Heart left ventricle (tissue), 16 donors: ENCODE measurements at regions of chr9 and their contacts with region 1.

Region 1: DNA sequence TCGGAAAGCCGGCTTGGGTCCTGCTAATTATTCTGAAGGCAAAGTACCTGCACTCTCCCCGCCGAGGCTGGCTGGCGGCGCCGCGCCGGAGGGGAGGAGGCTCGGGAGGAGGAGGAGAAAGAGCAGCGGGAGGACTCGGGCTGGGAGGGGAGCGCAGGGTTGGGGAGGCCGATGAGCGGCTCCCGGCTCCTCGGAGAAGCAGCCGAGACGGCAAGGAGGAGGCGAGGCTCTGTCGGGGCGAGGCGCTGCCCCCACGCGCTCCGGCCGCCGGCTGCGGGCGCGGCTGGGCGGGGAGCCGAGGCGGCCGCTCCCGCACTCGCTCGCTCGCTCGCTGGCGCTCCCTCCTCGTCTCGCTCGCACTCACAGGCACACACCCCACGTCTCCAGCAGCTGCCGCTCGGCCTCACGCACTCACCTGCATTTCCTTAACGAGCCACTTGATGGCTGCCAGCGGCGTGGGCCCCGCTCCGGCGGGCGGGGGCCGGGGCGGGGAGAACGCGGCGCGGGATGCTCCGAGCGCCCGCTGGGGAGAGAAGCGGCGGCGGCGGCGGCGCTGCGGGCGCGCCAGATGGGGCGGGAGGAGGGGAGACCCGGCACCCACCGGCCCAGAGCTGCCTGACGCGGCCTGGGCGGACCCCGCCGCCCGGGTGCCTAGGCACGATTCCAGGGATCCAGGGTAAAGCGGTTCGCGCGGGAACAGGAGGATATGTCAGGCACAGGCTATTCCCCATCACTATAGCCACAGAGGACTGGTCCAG is at the start of gene PTPRD:
- DNase-seq: peak in 2 of 5 donors; percentile 23 to 56
- ATAC-seq: peak in 2 of 4 donors; percentile 43 to 46
- H3K4me3 ChIP-seq: peak within 1 kb of the TSS in 11 of 12 donors; percentile 23 to 55 (median 41)
- H3K27ac ChIP-seq: no peak within 1 kb of the TSS
- H3K4me1 ChIP-seq: peaks cover 0 to 15% (median 0%) of the 10 kb centered on the region in 12 donors
- H3K27me3 ChIP-seq: peaks cover 6 to 78% (median 35%) of the 10 kb centered on the region in 9 donors
- CTCF ChIP-seq: peak in 1 of 12 donors; percentile 14
- POLR2A ChIP-seq: no peak
- total RNA-seq, gene PTPRD: 11.0 to 25.3 (median 19.2) TPM

Region 2: GRCh38 chr9:10396615-10397014 is 216.2 kb before region 1 on chr9:
- intact Hi-C with region 1: no loop called
- DNase-seq: no peak
- ATAC-seq: no peak
- H3K4me3 ChIP-seq: no peak overlapping the region
- H3K27ac ChIP-seq: no peak overlapping the region
- H3K4me1 ChIP-seq: no peaks in the 10 kb centered on the region
- H3K27me3 ChIP-seq: no peaks in the 10 kb centered on the region
- CTCF ChIP-seq: no peak
- POLR2A ChIP-seq: no peak

Region 3: DNA sequence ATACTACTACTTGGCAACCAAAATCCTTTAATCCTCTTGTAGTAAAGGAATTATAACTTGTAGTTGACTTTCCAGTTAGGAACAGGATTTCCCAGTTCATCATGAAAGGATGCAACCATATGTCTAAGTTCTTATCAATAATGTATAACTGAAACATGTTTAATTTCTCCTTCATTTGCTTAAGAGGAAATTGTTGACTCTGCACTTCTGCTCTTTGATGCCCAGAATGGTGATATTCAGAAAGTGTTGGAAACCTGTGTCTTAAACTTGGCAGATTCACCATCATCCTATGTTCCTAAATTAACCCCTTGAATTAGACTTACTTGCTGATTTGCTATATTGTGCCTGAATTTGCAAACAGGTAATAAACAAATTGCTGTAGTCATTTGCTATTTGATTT is 201.5 kb before region 1 on chr9:
- intact Hi-C with region 1: no loop called
- DNase-seq: no peak
- ATAC-seq: no peak
- H3K4me3 ChIP-seq: no peak overlapping the region
- H3K27ac ChIP-seq: no peak overlapping the region
- H3K4me1 ChIP-seq: no peaks in the 10 kb centered on the region
- H3K27me3 ChIP-seq: no peaks in the 10 kb centered on the region
- CTCF ChIP-seq: no peak
- POLR2A ChIP-seq: no peak

Region 4: GRCh38 chr9:10661994-10662393 is 49.2 kb after region 1 on chr9:
- intact Hi-C with region 1: no loop called
- DNase-seq: no peak
- ATAC-seq: no peak
- H3K4me3 ChIP-seq: no peak overlapping the region
- H3K27ac ChIP-seq: no peak overlapping the region
- H3K4me1 ChIP-seq: no peaks in the 10 kb centered on the region
- H3K27me3 ChIP-seq: no peaks in the 10 kb centered on the region
- CTCF ChIP-seq: no peak
- POLR2A ChIP-seq: no peak

Region 5: GRCh38 chr9:10678790-10679189 is 66.0 kb after region 1 on chr9:
- intact Hi-C with region 1: loop called in 1 of 10 experiments (anchors 10 kb)
- DNase-seq: no peak
- ATAC-seq: no peak
- H3K4me3 ChIP-seq: no peak overlapping the region
- H3K27ac ChIP-seq: no peak overlapping the region
- H3K4me1 ChIP-seq: no peaks in the 10 kb centered on the region
- H3K27me3 ChIP-seq: no peaks in the 10 kb centered on the region
- CTCF ChIP-seq: no peak
- POLR2A ChIP-seq: no peak

Region 6: GRCh38 chr9:11805969-11806368 is 1193.1 kb after region 1 on chr9:
- intact Hi-C with region 1: no loop called
- DNase-seq: no peak
- ATAC-seq: no peak
- H3K4me3 ChIP-seq: no peak overlapping the region
- H3K27ac ChIP-seq: no peak overlapping the region
- H3K4me1 ChIP-seq: no peaks in the 10 kb centered on the region
- H3K27me3 ChIP-seq: no peaks in the 10 kb centered on the region
- CTCF ChIP-seq: no peak
- POLR2A ChIP-seq: no peak